Psoas muscle (tissue), 8 donors: ENCODE measurements at regions of chr9 and their contacts with region 1.

Region 1: DNA sequence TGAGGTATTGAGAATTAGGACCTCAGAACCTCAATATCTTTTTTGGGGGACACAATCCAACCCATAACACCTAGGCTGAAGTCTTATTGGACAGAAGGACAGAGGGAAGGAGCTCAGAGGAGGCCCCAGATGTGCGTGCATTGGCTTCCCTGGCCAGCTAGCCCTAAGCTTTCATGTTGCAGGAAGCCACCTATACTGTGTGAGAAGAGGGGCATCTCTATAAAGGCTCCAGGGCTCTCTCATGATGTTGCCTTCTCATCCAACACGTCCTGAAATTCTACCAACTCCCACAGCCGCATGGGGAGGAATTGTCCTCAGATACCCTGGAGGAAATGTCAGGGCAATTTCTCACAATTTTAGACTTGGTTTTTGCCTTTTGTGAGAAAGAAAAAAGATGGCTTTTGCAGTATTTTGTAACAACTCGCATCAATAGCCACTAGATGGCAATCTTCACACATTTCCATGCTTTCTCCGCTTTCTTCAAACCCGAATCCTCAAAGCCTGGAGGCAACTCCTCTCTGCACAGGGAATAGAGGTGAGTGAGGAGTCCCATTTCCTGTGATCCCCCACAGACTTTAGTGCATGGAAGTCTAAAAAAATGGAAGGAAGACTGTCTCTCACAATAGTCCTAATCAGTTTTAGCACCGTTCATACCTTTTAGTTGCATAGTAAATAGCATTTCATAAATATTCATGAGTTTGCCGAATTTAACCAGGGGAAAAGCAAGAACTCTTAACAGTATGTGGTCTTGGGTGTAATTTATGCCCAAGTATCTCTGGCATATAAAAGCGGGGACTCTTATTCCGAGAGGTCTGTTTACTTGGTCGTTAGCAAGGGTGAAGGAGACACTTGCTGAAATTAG is 7.4 kb upstream of the PPP3R2 start:
- DNase-seq: no peak
- ATAC-seq: peak in 2 of 4 donors; percentile 46 to 67
- H3K4me3 ChIP-seq: no peak overlapping the region
- H3K27ac ChIP-seq: no peak overlapping the region
- H3K4me1 ChIP-seq: no peaks in the 10 kb centered on the region
- H3K27me3 ChIP-seq: peaks cover 0 to 3% (median 0%) of the 10 kb centered on the region in 3 donors
- CTCF ChIP-seq: peak; percentile 57

Region 2: DNA sequence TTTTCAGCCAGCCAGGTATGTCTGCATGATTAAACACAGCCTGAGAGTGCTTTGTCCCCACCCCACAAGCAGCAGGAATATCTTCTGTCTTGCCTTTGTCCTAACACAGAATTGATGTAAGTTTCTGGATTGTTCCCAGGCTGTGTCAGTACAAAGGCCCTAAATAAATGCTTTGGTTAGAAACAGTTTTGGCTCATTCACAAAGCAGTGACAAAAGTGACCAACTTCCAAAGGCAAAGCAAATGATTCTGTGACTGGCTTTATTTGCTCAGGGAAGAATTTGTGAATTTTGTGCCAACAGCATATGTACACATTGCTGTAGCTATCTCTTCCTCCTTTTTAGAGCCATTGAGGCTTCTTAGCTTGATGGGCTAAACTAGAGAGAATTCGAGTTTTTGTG is 439.9 kb before region 1 on chr9:
- intact Hi-C with region 1: no loop called
- DNase-seq: no peak
- ATAC-seq: no peak
- H3K4me3 ChIP-seq: no peak overlapping the region
- H3K27ac ChIP-seq: no peak overlapping the region
- H3K4me1 ChIP-seq: no peaks in the 10 kb centered on the region
- H3K27me3 ChIP-seq: peaks cover 0 to 3% (median 0%) of the 10 kb centered on the region in 3 donors
- CTCF ChIP-seq: no peak

Region 3: GRCh38 chr9:101727612-101728524 is 125.7 kb after region 1 on chr9:
- intact Hi-C with region 1: loop called in 1 of 2 experiments (anchors 2 kb)
- DNase-seq: no peak
- ATAC-seq: no peak
- H3K4me3 ChIP-seq: no peak overlapping the region
- H3K27ac ChIP-seq: no peak overlapping the region
- H3K4me1 ChIP-seq: no peaks in the 10 kb centered on the region
- H3K27me3 ChIP-seq: peaks cover 0 to 2% (median 0%) of the 10 kb centered on the region in 3 donors
- CTCF ChIP-seq: peak; percentile 31